Mammary epithelial cell (primary cell): ENCODE measurements at regions of chr20 and their contacts with region 1.

Region 1: DNA sequence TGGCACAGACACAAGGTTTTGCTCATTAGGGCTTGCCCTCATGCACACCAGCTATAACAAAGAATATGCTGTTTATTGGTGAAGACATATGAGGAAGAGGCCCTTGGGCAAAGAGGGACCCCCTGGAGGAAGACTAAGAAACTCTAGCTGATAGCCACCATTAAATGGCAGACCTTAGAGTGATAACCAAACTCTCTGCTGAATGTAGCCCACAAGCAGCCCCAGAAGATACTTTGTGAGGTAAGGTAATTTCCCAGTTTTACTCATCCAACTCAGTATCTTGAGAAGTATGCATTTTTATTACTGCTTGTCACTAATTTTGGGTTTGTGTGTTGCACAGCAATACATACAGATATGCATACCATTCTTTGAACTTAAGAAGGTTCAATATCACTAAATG is 563.3 kb downstream of the DOK5 start:
- DNase-seq: no peak
- H3K4me3 ChIP-seq: no peak overlapping the region
- H3K27ac ChIP-seq: no peak overlapping the region
- H3K4me1 ChIP-seq: no peaks in the 10 kb centered on the region
- H3K27me3 ChIP-seq: no peaks in the 10 kb centered on the region
- CTCF ChIP-seq: no peak

Region 2: DNA sequence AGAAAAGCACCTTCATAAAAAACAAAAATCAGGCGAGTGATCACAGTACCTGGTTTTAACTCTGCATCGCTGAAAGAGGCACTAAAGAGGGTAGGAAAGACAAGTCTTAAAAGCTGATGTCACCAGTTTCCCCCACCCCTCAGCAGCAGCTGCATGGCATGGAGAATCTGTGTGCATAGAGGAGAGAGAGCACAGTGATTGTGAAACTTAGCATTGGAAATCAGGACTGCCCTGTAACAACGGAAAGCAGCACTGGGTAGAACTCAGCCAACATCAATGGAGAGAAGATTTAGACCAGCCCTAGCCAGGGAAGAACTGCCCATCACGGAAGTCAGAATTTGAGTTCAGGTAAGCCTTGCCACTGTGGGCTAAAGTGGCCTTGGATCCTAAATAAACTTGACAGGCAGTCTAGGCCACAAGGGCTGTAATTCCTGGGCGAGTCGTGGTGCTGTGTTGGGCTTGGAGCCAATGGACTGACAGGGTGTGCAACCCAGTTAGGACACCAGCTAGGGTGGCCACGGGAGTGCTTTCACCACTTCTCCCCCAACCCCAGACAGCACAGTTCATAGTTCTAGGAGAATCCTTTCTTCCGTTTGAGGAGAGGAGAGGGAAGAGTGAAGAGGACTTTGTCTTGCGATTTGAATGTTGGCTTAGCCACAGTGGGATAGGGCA is 141.0 kb before region 1 on chr20:
- CTCF ChIA-PET with region 1: no interaction called
- dilution Hi-C with region 1: no loop called
- in situ Hi-C with region 1: no loop called
- intact Hi-C with region 1: no loop called
- DNase-seq: no peak
- H3K4me3 ChIP-seq: no peak overlapping the region
- H3K27ac ChIP-seq: no peak overlapping the region
- H3K4me1 ChIP-seq: no peaks in the 10 kb centered on the region
- H3K27me3 ChIP-seq: no peaks in the 10 kb centered on the region
- CTCF ChIP-seq: no peak

Region 3: GRCh38 chr20:54908497-54908896 is 130.2 kb before region 1 on chr20:
- CTCF ChIA-PET with region 1: no interaction called
- dilution Hi-C with region 1: no loop called
- in situ Hi-C with region 1: no loop called
- intact Hi-C with region 1: no loop called
- DNase-seq: no peak
- H3K4me3 ChIP-seq: no peak overlapping the region
- H3K27ac ChIP-seq: no peak overlapping the region
- H3K4me1 ChIP-seq: no peaks in the 10 kb centered on the region
- H3K27me3 ChIP-seq: no peaks in the 10 kb centered on the region
- CTCF ChIP-seq: no peak

Region 4: GRCh38 chr20:55004049-55004448 is 34.6 kb before region 1 on chr20:
- CTCF ChIA-PET with region 1: no interaction called
- dilution Hi-C with region 1: no loop called
- in situ Hi-C with region 1: no loop called
- intact Hi-C with region 1: loop called (anchors 1 kb)
- DNase-seq: no peak
- H3K4me3 ChIP-seq: no peak overlapping the region
- H3K27ac ChIP-seq: no peak overlapping the region
- H3K4me1 ChIP-seq: no peaks in the 10 kb centered on the region
- H3K27me3 ChIP-seq: no peaks in the 10 kb centered on the region
- CTCF ChIP-seq: peak in 1 of 2 donors; percentile 34

Region 5: DNA sequence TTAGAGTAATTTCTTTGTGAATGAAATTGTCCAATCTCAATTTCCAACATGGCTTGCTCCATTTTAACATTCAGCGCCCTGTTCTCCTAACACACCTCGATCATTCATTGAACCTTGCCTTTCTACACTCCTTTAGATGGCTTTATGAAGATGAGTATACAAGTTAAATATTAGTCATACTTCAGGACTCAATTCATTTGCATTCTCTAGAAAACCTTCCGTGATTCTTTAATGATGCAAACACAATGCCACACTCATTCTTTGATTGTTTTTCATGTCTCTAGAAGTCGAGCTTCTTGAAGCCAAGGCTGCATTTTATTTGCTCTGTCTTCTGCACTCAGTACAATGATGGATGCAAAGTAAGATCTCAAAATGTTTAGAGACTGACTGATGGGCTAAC is 77.9 kb after region 1 on chr20:
- CTCF ChIA-PET with region 1: no interaction called
- dilution Hi-C with region 1: no loop called
- in situ Hi-C with region 1: no loop called
- intact Hi-C with region 1: no loop called
- DNase-seq: no peak
- H3K4me3 ChIP-seq: no peak overlapping the region
- H3K27ac ChIP-seq: peak overlapping the region; percentile 22
- H3K4me1 ChIP-seq: peaks cover 13% of the 10 kb centered on the region
- H3K27me3 ChIP-seq: no peaks in the 10 kb centered on the region
- CTCF ChIP-seq: no peak